CD4-positive, alpha-beta T cell (primary cell): ENCODE measurements at regions of chr21 and their contacts with region 1.

Region 1: GRCh38 chr21:35508139-35508888 is 459.2 kb upstream of the RUNX1 start:
- DNase-seq: peak in 3 of 14 experiments; percentile 10 to 53 (median 42)
- ATAC-seq: no peak
- H3K4me3 ChIP-seq: no peak overlapping the region
- H3K4me3 Mint-ChIP-seq: no peak overlapping the region
- H3K27ac ChIP-seq: no peak overlapping the region
- H3K27ac Mint-ChIP-seq: peak overlapping the region; percentile 69
- H3K4me1 ChIP-seq: peaks cover 19% of the 10 kb centered on the region
- H3K4me1 Mint-ChIP-seq: peaks cover 69% of the 10 kb centered on the region
- H3K27me3 ChIP-seq: no peaks in the 10 kb centered on the region
- H3K27me3 Mint-ChIP-seq: no peaks in the 10 kb centered on the region
- CTCF ChIP-seq: no peak

Region 2: GRCh38 chr21:35528116-35529042 is 20.1 kb after region 1 on chr21:
- CTCF ChIA-PET with region 1: no interaction called
- POLR2A ChIA-PET with region 1: interaction called, 25 read pairs
- intact Hi-C with region 1: no loop called
- DNase-seq: peak; percentile 7 to 64 (median 35)
- ATAC-seq: peak; percentile 66
- H3K4me3 ChIP-seq: peak overlapping the region; percentile 61
- H3K4me3 Mint-ChIP-seq: peak overlapping the region; percentile 94
- H3K27ac ChIP-seq: peak overlapping the region; percentile 71 to 76
- H3K27ac Mint-ChIP-seq: peak overlapping the region; percentile 97
- H3K4me1 ChIP-seq: peaks cover 29% of the 10 kb centered on the region
- H3K4me1 Mint-ChIP-seq: peaks cover 49% of the 10 kb centered on the region
- H3K27me3 ChIP-seq: no peaks in the 10 kb centered on the region
- H3K27me3 Mint-ChIP-seq: no peaks in the 10 kb centered on the region
- CTCF ChIP-seq: no peak